Activated T-helper 1 cell treated with anti-CD3 and anti-CD28 coated beads, Interleukin-12 subunit alpha, Interleukin-12 subunit beta, Interleukin-2, Interleukin-4 antibody, amounts not matched to agents 30 ng/mL and 10 ng/mL and 1 ng/mL, durations not matched to agents 14 hours and 24 hours and 36 hours (primary cell): ENCODE measurements at regions of chr5 and their contacts with region 1.

Region 1: GRCh38 chr5:68287976-68288706 is 72.6 kb downstream of the PIK3R1 start:
- DNase-seq: peak; percentile 36
- H3K4me3 Mint-ChIP-seq: peak overlapping the region; percentile 88
- H3K27ac Mint-ChIP-seq: peak overlapping the region; percentile 81
- H3K4me1 Mint-ChIP-seq: peaks cover 85% of the 10 kb centered on the region
- H3K27me3 Mint-ChIP-seq: no peaks in the 10 kb centered on the region

Region 2: DNA sequence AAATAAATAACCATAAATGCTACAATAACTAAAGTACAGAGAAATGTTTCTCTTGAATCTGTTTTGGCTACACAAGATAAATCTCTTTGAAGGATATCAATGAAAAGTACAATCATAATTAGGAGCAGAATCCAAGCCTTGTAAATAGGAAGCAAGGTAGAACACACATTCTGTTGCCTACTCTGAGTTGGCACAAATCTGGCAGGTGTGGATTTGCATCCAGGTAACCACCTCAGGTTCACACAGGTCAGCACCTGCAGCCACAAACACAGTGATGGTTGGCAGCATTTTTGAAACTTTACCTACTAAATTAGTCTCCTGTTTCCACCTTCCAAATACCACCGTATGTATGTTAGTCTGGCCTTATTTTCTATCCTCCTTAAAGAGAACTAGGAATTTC is 177.9 kb before region 1 on chr5:
- intact Hi-C with region 1: no loop called
- DNase-seq: no peak
- H3K4me3 Mint-ChIP-seq: no peak overlapping the region
- H3K27ac Mint-ChIP-seq: no peak overlapping the region
- H3K4me1 Mint-ChIP-seq: no peaks in the 10 kb centered on the region
- H3K27me3 Mint-ChIP-seq: peaks cover 2% of the 10 kb centered on the region

Region 3: GRCh38 chr5:68141494-68141893 is 146.6 kb before region 1 on chr5:
- intact Hi-C with region 1: no loop called
- DNase-seq: no peak
- H3K4me3 Mint-ChIP-seq: no peak overlapping the region
- H3K27ac Mint-ChIP-seq: no peak overlapping the region
- H3K4me1 Mint-ChIP-seq: peaks cover 5% of the 10 kb centered on the region
- H3K27me3 Mint-ChIP-seq: no peaks in the 10 kb centered on the region

Region 4: DNA sequence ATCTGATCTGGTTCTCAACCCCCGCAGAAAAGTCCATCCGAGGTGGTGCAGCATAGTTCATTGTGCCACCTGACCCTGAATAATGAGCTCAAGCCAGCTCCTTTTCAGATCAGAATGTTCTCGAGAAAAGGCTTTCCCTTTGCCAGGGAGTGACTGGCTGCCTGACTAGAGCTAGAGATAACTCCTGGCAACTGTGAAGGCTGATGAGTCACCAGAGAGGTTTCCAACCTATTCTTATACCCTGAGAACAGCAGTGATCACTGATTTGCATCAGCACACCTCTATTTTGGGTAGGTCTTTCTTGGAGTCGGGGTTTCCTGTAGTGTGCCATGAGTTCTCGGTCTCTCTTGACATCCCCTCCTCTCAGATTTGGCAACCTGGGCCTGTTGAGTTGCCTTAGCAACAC is 55.3 kb after region 1 on chr5:
- intact Hi-C with region 1: loop called (anchors 2 kb)
- DNase-seq: peak; percentile 6
- H3K4me3 Mint-ChIP-seq: no peak overlapping the region
- H3K27ac Mint-ChIP-seq: no peak overlapping the region
- H3K4me1 Mint-ChIP-seq: peaks cover 38% of the 10 kb centered on the region
- H3K27me3 Mint-ChIP-seq: peaks cover 7% of the 10 kb centered on the region

Region 5: GRCh38 chr5:68424799-68425537 is 136.8 kb after region 1 on chr5:
- intact Hi-C with region 1: loop called (anchors 1 kb)
- DNase-seq: peak; percentile 20
- H3K4me3 Mint-ChIP-seq: peak overlapping the region; percentile 6
- H3K27ac Mint-ChIP-seq: peak overlapping the region; percentile 19
- H3K4me1 Mint-ChIP-seq: peaks cover 46% of the 10 kb centered on the region
- H3K27me3 Mint-ChIP-seq: peaks cover 5% of the 10 kb centered on the region

Region 6: DNA sequence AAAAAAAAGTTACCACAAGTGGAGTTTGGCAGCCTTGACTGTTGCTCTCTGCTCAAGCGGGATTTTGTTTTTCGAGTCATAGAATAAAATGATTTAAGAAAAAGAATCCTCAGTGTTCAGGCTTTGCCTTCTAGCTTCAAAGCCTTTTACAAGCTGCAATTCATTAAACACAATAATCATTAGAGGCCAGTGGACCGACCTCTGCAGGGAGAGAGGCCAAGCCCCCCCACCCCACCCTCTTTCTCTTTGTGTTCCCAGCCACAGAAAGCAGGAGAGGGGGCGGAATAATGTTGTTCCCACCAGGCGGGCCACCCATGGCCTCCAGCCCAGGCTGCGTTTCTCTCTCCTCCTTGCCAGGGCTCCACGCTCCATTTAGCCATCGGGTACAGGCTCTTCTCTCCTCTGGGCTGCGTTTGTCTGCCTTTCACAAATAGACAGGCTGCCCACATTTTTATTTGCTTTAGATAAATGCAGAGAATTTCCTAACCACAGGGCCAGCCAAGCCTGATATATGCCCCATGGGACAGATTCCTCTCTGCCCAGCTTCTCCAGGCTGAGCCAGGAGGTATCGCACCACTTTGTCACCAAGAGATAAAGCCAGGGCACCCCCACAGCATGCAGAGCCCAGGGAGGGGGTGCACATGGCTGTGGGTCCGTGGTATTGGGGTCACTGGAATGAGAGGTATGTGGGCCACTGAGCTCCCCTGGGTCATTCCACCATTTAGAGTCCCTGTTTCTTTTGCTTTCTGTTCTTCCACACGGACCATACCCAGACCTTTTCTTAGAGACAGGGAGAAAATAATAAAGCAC is 246.2 kb after region 1 on chr5:
- intact Hi-C with region 1: no loop called
- DNase-seq: no peak
- H3K4me3 Mint-ChIP-seq: no peak overlapping the region
- H3K27ac Mint-ChIP-seq: no peak overlapping the region
- H3K4me1 Mint-ChIP-seq: no peaks in the 10 kb centered on the region
- H3K27me3 Mint-ChIP-seq: peaks cover 4% of the 10 kb centered on the region

Region 7: GRCh38 chr5:68544648-68545552 is 256.8 kb after region 1 on chr5:
- intact Hi-C with region 1: loop called (anchors 5 kb)
- DNase-seq: no peak
- H3K4me3 Mint-ChIP-seq: no peak overlapping the region
- H3K27ac Mint-ChIP-seq: no peak overlapping the region
- H3K4me1 Mint-ChIP-seq: no peaks in the 10 kb centered on the region
- H3K27me3 Mint-ChIP-seq: peaks cover 11% of the 10 kb centered on the region

Region 8: GRCh38 chr5:69007726-69008368 is 719.7 kb after region 1 on chr5:
- intact Hi-C with region 1: loop called (anchors 1 kb)
- DNase-seq: peak; percentile 49
- H3K4me3 Mint-ChIP-seq: no peak overlapping the region
- H3K27ac Mint-ChIP-seq: no peak overlapping the region
- H3K4me1 Mint-ChIP-seq: no peaks in the 10 kb centered on the region
- H3K27me3 Mint-ChIP-seq: peaks cover 16% of the 10 kb centered on the region